Dendritic cell treated with granulocyte-macrophage colony-stimulating factor and Interleukin-4, amounts not matched to agents 40 ng/mL and 50 ng/mL, for 4 days (primary cell): ENCODE measurements at regions of chr19 and their contacts with region 1.

Region 1: GRCh38 chr19:46860125-46860845 is 512 bp upstream of the ARHGAP35 start:
- H3K4me3 Mint-ChIP-seq: peak overlapping the region; percentile 89
- H3K27ac Mint-ChIP-seq: no peak overlapping the region
- H3K4me1 Mint-ChIP-seq: peaks cover 26% of the 10 kb centered on the region
- H3K27me3 Mint-ChIP-seq: no peaks in the 10 kb centered on the region

Region 2: DNA sequence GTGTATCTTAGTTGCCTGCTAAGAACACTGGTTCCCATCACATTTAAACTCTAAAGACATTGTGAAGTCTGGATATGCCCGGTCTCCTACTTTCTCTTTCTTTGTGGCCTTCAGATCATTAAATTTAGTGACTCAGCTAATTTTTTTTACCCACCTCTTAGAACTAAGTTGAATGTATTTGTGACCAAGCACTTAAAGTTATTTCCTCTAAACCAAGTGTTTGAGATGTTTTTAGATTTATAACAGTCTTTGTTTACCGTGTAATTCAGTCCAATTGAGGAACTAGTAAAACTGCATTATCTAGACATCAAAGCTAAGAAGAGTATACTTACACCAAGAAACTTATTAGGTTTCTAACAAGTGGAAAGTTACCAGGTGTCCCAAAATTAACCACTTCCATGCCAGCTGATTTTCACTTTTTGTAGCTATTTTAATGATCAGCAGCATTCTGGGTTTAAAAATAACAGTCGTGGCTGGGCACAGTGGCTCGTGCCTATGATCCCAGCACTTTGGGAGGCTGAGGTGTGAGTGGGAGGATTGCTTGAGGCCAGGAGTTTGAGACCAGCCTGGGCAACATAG is 53.7 kb after region 1 on chr19:
- intact Hi-C with region 1: no loop called
- H3K4me3 Mint-ChIP-seq: peak overlapping the region; percentile 57
- H3K27ac Mint-ChIP-seq: peak overlapping the region; percentile 71
- H3K4me1 Mint-ChIP-seq: peaks cover 37% of the 10 kb centered on the region
- H3K27me3 Mint-ChIP-seq: no peaks in the 10 kb centered on the region

Region 3: GRCh38 chr19:46932346-46932745 is 72.1 kb after region 1 on chr19:
- intact Hi-C with region 1: loop called (anchors 10 kb)
- H3K4me3 Mint-ChIP-seq: no peak overlapping the region
- H3K27ac Mint-ChIP-seq: no peak overlapping the region
- H3K4me1 Mint-ChIP-seq: peaks cover 15% of the 10 kb centered on the region
- H3K27me3 Mint-ChIP-seq: no peaks in the 10 kb centered on the region

Region 4: GRCh38 chr19:46990991-46991676 is 130.8 kb after region 1 on chr19:
- intact Hi-C with region 1: loop called (anchors 5 kb)
- H3K4me3 Mint-ChIP-seq: no peak overlapping the region
- H3K27ac Mint-ChIP-seq: no peak overlapping the region
- H3K4me1 Mint-ChIP-seq: peaks cover 18% of the 10 kb centered on the region
- H3K27me3 Mint-ChIP-seq: no peaks in the 10 kb centered on the region

Region 5: GRCh38 chr19:47020992-47021496 is 160.8 kb after region 1 on chr19:
- intact Hi-C with region 1: no loop called
- H3K4me3 Mint-ChIP-seq: peak overlapping the region; percentile 42
- H3K27ac Mint-ChIP-seq: no peak overlapping the region
- H3K4me1 Mint-ChIP-seq: peaks cover 12% of the 10 kb centered on the region
- H3K27me3 Mint-ChIP-seq: peaks cover 81% of the 10 kb centered on the region

Region 6: DNA sequence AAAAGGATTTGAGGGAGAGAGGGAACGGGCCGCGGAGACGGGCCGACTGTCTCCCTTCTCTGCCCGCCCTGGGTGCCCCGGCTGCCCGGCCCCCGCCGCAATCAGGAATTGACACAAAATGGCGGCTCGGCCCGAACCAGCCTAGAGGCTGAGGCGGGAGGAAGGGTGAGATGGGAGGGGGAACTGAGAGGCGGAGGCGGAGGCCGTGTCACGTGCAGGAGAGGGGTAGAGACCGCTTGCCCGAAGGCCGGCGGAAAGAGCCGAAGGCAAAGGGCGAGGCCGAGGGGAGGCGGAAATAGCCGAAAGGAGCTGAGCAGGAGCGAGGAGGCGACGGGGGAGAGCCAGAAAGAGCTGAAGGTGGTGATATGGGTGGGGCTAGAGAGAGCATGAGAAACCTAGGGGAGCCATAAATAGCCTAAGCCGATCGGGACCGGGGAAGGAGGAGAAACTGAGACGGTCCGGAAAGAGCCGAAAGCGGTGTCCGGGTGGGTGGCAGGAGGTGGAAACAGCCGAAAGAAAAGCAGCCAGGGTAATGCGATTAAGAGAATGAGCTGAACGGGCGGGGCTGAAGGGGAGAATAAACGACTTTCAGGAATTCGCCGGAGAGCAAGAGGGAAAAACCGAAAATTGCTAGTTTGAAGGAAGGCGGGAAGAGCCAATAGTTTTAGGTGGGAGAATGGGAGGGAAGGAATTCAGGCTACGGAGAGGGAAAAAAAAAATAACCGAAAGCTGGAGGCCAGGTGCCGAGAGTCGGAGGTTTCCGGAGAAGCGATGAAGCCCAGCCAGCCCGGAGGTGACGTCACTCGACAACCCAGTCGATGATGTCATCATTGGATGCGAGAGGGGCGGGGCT is 252.9 kb after region 1 on chr19 and contains the start of gene ZC3H4:
- intact Hi-C with region 1: loop called (anchors 5 kb)
- H3K4me3 Mint-ChIP-seq: peak within 1 kb of the TSS; percentile 99
- H3K27ac Mint-ChIP-seq: peak within 1 kb of the TSS; percentile 100
- H3K4me1 Mint-ChIP-seq: peaks cover 37% of the 10 kb centered on the region
- H3K27me3 Mint-ChIP-seq: peaks cover 11% of the 10 kb centered on the region